Activated naive CD4-positive, alpha-beta T cell treated with anti-CD3 and anti-CD28 coated beads for 36 hours (primary cell): ENCODE measurements at regions of chr5 and their contacts with region 1.

Region 1: DNA sequence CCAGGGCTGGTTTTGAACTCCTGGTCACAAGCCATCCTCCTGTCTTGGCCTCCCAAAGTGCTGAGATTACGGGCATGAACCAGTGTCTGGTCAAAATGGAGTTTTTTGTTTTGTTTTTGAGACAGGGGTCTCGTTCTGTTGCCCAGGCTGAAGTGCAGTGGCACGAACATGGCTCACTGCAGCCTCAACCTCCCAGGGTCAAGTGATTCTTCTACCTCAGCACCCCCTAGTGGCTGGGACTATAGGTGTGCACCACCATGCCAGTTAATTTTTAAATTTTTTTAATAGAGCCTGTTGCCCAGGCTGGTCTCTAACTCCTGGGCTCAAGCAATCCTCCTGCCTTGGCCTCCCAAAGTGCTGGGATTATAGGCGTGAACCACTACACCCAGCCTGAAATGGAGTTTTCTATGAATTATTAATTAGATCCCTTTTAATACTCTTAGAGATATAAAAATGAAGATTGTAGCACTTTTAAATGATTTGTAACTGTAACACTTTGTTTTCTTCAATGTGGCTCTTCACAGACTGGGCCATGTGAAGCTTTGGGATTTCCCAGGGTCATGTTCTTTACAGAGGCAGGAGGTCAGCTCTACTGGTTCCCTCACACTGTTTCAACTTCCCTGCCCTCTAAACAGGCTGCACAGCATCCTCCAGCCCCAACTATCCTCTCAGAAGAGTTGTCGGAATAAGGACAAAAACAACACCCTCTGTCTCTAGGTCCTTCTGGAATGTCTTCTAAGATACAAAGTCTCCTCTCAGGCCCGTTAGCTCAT is 32.7 kb upstream of the SPARC start:
- DNase-seq: peak; percentile 55
- H3K4me3 Mint-ChIP-seq: no peak overlapping the region
- H3K27ac Mint-ChIP-seq: no peak overlapping the region
- H3K4me1 Mint-ChIP-seq: peaks cover 12% of the 10 kb centered on the region
- H3K27me3 Mint-ChIP-seq: no peaks in the 10 kb centered on the region

Region 2: DNA sequence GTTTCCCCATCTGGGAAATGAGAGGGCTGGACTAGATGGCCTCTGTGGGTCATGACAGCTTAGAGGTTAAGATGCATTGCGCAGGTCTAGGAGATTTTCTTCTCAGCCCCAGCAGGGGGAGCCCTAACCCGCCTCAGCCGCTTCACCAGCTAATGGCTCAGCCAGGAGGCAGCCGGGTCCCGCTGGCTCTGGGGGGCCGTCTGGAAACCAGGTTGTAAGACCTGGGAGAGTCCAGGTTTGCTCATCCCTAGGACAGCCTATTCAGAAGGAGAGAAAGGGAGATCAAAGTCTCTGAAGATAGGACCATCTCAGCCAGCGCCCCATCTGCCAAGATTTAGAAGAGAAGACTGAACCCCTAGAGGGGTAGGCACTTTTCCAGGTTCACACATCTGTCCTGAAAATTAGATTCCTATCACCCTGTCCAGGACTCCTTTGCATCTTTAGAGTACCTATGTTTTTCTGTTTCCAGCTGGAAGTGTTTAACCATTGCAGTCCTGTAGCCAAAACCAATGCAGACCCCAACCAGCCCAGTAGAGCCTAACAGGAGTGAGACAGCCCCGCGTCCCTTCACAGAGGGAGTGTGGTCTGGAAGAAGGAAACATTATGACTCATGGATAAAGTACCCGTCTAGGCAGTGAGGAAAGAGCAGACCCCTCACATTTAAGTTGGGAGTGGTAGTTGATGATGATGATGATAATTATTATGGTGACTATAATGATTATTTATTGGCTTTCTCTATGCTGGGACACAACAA is 60.2 kb before region 1 on chr5:
- CTCF ChIA-PET with region 1: interaction called, 23 read pairs
- intact Hi-C with region 1: loop called (anchors 1 kb)
- DNase-seq: peak; percentile 87
- H3K4me3 Mint-ChIP-seq: no peak overlapping the region
- H3K27ac Mint-ChIP-seq: no peak overlapping the region
- H3K4me1 Mint-ChIP-seq: peaks cover 17% of the 10 kb centered on the region
- H3K27me3 Mint-ChIP-seq: no peaks in the 10 kb centered on the region

Region 3: DNA sequence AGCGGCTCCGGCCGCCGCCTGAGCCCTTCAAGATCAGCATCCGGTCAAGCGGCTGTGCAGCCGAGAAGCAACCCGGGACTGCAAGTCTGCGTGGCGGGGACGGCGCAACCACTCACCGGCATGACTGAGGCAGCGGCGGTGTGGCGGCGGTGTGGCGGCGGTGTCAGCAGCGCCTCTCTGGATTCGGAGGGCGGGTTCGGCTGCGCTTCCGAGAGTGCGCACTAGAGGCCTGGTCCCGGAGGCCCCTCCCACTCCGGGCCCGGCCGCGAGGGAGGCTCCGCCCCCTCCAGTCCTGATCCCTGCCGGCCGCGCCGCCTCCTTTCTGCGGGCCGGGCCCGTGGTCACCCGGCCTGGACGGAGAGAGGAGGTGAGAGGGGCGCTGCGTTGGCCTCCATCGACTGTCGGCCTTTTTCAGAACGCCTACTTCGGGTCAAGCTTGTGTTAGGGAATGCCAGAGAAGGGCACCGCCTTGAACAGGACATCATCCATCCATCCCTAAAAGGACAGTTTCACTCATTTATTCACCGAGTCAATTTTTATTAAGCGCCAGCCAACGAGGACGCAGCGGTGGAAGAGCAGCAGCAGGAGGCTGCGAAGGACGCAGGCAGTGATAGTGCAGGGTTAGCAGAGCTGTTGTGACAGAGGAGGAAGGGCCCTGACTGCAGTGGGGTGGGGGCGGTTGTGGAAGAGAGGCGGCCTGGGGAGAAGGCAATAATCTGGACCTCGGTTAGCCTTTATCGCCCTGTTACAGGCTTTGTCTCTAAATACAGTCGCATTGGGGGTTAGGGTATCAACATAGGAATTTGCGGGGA is 39.2 kb after region 1 on chr5 and contains the start of gene ATOX1:
- CTCF ChIA-PET with region 1: interaction called, 3 read pairs
- intact Hi-C with region 1: loop called (anchors 1 kb)
- DNase-seq: peak; percentile 91
- H3K4me3 Mint-ChIP-seq: peak within 1 kb of the TSS; percentile 81
- H3K27ac Mint-ChIP-seq: peak within 1 kb of the TSS; percentile 78
- H3K4me1 Mint-ChIP-seq: peaks cover 30% of the 10 kb centered on the region
- H3K27me3 Mint-ChIP-seq: no peaks in the 10 kb centered on the region
- total RNA-seq, gene ATOX1: 87.7 to 92.6 TPM